ENCODE measurements at regions of chr1 and their contacts with region 1.

Region 1: DNA sequence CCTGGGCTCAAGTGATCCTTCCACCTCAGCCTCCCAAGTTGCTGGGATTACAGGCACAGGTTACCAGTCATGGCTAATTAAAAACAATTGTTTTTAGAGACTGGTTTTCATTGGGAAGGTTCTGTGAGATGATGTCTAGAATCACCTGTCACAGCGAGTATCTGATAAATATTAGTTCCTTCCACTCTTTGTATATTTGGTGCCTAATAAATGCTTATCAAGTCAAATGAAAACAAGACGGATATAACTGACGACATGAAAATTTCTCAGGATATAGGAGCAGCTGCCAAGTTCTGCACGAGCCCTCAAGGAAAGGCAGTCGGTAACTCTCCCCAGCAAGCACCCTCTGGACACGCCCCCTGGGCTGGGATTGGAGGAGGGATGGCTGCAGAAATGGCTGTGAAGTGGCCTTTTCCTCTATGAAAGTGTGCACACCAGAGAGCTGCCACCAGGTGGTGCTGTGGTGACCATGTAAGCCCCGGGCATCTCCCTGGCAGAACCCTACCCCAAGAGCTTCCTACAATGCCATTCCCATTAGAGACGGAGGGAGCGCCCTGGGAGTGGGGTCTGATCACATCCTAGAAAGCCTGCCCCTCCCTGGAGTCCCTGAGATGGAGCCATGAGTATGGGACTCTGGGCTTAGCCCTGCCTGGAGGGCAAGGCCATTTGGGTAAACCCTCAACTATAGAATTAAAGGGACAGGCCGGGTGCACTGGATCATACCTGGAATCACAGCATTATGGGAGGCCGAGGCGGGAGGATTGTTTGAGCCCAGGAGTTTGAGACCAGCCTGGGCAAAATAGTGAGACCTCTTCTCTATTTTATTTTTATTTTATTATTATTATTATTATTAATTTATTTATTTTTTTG is 50.9 kb downstream of the HTR6 start:
- DNase-seq: peak; percentile 88
- H3K4me3 ChIP-seq: no peak overlapping the region
- H3K27ac ChIP-seq: no peak overlapping the region
- H3K4me1 ChIP-seq: no peaks in the 10 kb centered on the region
- H3K27me3 ChIP-seq: no peaks in the 10 kb centered on the region
- CTCF ChIP-seq: peak; percentile 51 to 83 (median 76)
- POLR2A ChIP-seq: no peak

Region 2: GRCh38 chr1:19762175-19762779 is 46.7 kb after region 1 on chr1:
- intact Hi-C with region 1: loop called (anchors 5 kb)
- DNase-seq: peak; percentile 27
- H3K4me3 ChIP-seq: no peak overlapping the region
- H3K27ac ChIP-seq: no peak overlapping the region
- H3K4me1 ChIP-seq: no peaks in the 10 kb centered on the region
- H3K27me3 ChIP-seq: no peaks in the 10 kb centered on the region
- CTCF ChIP-seq: peak in 3 of 4 experiments; percentile 75 to 84 (median 77)
- POLR2A ChIP-seq: no peak

Region 3: DNA sequence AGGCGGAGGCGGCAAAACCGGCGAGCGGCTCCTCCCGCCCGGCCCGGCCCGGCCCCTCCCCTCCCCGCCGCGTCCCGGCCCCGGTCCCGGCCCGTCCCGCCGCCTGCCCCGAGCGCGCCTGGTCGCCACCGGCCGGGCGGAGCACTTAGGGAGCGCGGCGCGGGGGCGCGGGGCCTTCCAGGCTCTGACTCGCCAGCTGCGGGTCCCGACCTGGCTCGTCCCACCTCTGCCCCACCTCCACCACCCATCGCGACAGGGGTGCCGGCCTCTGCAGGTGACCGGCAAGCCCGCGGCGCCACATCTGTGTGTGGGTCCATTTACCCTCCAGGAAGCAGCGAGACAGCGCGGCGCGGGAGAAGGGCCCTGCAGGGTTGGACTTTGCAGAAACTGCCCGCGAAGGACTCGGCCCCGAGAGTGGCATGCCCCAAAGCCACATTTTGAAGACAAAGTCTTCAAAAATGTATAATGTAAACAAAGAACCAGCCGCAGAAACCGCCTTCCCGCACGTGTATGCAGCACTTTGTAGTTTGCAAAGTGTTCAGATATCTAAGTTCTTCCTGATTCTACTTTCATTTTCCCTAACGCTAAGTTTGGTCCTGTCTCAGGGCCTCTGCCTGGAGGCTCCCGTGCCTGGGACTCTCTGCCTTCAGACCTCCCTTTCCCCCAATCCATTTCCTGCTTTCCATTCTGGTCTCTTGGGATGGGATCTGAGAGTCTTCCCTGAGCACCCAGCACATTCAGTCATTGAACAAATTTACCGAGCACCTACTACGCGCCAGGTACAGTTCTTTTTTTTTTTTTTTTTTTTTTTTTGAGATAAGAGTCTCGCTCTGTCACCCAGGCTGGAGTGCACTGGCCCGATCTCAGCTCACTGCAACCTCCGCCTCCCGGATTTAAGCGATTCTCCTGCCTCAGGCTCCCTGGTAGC is 84.6 kb after region 1 on chr1 and contains the start of gene TMCO4:
- intact Hi-C with region 1: loop called (anchors 10 kb)
- DNase-seq: peak; percentile 38
- H3K4me3 ChIP-seq: peak within 1 kb of the TSS; percentile 57 to 65
- H3K27ac ChIP-seq: peak within 1 kb of the TSS; percentile 84 to 94
- H3K4me1 ChIP-seq: peaks cover 7% of the 10 kb centered on the region
- H3K27me3 ChIP-seq: no peaks in the 10 kb centered on the region
- CTCF ChIP-seq: no peak
- POLR2A ChIP-seq: no peak
- total RNA-seq, gene TMCO4: 60.5 to 89.9 TPM